ENCODE measurements at regions of chr9 and their contacts with region 1.

Region 1: DNA sequence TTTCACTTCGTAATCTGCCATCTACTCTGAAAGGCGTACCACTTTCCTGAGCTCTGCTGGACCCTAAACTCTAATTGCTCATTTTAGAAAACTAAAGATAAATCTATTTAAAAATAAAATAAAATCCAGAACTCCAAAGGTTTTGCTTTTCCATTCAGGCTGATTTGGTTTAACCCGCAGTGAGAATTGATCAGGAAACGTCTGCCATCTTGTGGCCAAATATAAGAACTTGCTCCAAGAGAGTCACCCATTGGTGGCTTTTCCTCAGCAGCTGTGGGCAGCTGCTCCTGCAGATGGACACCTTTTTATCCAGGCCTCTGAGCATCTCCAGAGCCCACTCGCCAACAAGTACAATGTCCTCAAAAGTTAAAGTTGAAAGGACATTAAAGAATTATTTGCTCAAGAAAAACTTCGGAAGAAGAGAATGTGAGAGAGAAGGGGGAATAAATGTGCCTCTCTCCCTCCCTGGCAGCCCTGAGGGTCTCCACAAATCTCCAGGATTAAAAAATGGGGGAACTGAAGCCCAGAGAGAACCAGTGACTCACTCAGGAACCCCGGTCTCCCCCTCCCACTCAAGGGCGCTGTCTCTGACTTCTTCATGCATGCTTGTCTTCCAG is 4.1 kb downstream of the SAXO1 start:
- DNase-seq: peak in 1 of 2 experiments; percentile 49
- H3K4me3 ChIP-seq: no peak overlapping the region
- H3K4me3 Mint-ChIP-seq: no peak overlapping the region
- H3K27ac Mint-ChIP-seq: no peak overlapping the region
- H3K4me1 ChIP-seq: no peaks in the 10 kb centered on the region
- H3K4me1 Mint-ChIP-seq: no peaks in the 10 kb centered on the region
- H3K27me3 ChIP-seq: no peaks in the 10 kb centered on the region
- H3K27me3 Mint-ChIP-seq: peaks cover 15% of the 10 kb centered on the region
- CTCF ChIP-seq: peak; percentile 55 to 58

Region 2: GRCh38 chr9:18632632-18633403 is 396.1 kb before region 1 on chr9:
- CTCF ChIA-PET with region 1: no interaction called
- POLR2A ChIA-PET with region 1: no interaction called
- intact Hi-C with region 1: no loop called
- DNase-seq: no peak
- H3K4me3 ChIP-seq: no peak overlapping the region
- H3K4me3 Mint-ChIP-seq: no peak overlapping the region
- H3K27ac Mint-ChIP-seq: no peak overlapping the region
- H3K4me1 ChIP-seq: no peaks in the 10 kb centered on the region
- H3K4me1 Mint-ChIP-seq: no peaks in the 10 kb centered on the region
- H3K27me3 ChIP-seq: no peaks in the 10 kb centered on the region
- H3K27me3 Mint-ChIP-seq: peaks cover 2% of the 10 kb centered on the region
- CTCF ChIP-seq: no peak

Region 3: GRCh38 chr9:18791074-18791473 is 237.9 kb before region 1 on chr9:
- CTCF ChIA-PET with region 1: no interaction called
- POLR2A ChIA-PET with region 1: no interaction called
- intact Hi-C with region 1: loop called (anchors 10 kb)
- DNase-seq: peak; percentile 43 to 44
- H3K4me3 ChIP-seq: no peak overlapping the region
- H3K4me3 Mint-ChIP-seq: no peak overlapping the region
- H3K27ac Mint-ChIP-seq: no peak overlapping the region
- H3K4me1 ChIP-seq: no peaks in the 10 kb centered on the region
- H3K4me1 Mint-ChIP-seq: no peaks in the 10 kb centered on the region
- H3K27me3 ChIP-seq: no peaks in the 10 kb centered on the region
- H3K27me3 Mint-ChIP-seq: peaks cover 13% of the 10 kb centered on the region
- CTCF ChIP-seq: peak; percentile 45 to 62

Region 4: DNA sequence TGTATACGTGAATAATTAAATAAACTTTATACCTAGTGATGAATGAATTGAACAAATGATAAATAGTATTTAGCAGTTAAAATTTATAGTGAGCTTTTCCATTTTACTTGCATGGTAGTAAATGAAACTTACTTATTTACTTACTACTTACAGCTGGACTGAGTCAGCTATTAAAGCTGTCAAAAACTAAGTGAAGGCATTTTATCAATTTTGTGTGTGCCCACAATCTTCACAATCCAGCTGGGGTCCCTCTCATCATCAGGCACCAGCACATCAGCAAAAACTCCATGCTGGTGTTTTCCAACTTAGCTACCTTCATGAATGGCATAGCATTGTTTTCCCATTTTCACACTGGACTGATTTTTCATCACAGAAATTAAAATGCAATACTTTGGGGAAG is 77.0 kb before region 1 on chr9:
- CTCF ChIA-PET with region 1: no interaction called
- POLR2A ChIA-PET with region 1: no interaction called
- intact Hi-C with region 1: no loop called
- DNase-seq: no peak
- H3K4me3 ChIP-seq: no peak overlapping the region
- H3K4me3 Mint-ChIP-seq: no peak overlapping the region
- H3K27ac Mint-ChIP-seq: no peak overlapping the region
- H3K4me1 ChIP-seq: no peaks in the 10 kb centered on the region
- H3K4me1 Mint-ChIP-seq: no peaks in the 10 kb centered on the region
- H3K27me3 ChIP-seq: no peaks in the 10 kb centered on the region
- H3K27me3 Mint-ChIP-seq: peaks cover 9% of the 10 kb centered on the region
- CTCF ChIP-seq: no peak

Region 5: DNA sequence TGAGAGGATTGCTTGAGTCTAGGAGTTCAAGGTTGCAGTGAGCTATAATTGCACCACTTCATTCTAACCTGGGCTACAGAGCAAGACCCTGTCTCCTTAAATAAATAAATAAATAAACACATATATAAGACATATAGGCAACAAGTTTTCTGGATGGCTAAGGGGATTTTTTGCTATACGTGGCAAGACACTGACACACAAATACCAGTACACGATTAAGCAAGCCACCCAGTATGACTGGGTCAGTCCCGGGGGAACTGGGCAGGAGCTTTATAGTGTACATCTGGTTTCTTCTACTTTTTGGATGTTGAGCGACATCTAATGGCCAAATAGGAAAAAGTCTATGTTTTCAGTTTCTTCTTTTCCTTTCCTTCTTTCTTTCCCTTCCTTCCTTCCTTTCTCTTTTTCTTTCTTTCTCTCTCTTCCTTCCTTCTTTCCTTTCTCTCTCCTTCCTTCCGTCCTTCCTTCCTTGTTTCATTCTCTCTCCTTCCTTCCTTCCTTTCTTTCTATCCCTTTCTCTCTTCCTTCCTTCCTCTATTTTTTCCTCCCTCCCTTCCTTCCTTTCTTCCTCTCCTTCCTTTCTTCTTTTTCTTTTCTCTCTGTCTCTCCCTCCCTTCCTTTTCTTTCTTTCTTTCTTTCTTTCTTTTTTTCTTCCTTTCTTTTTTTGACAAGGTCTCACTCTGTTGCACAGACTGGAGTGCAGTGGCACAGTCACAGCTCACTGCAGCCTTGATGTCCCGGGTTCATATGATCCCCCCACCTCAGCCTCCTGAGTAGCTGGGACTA is 145.4 kb after region 1 on chr9:
- CTCF ChIA-PET with region 1: no interaction called
- POLR2A ChIA-PET with region 1: no interaction called
- intact Hi-C with region 1: no loop called
- DNase-seq: peak; percentile 59 to 68
- H3K4me3 ChIP-seq: no peak overlapping the region
- H3K4me3 Mint-ChIP-seq: no peak overlapping the region
- H3K27ac Mint-ChIP-seq: peak overlapping the region; percentile 23
- H3K4me1 ChIP-seq: peaks cover 14% of the 10 kb centered on the region
- H3K4me1 Mint-ChIP-seq: peaks cover 13% of the 10 kb centered on the region
- H3K27me3 ChIP-seq: no peaks in the 10 kb centered on the region
- H3K27me3 Mint-ChIP-seq: no peaks in the 10 kb centered on the region
- CTCF ChIP-seq: peak; percentile 34 to 37

Measured in Caco-2 (cell line).